ENCODE measurements at regions of chr3 and their contacts with region 1.

Region 1: GRCh38 chr3:195894780-195895607 is 13.4 kb downstream of the TNK2 start:
- DNase-seq: peak; percentile 71
- ATAC-seq: peak; percentile 29

Region 2: DNA sequence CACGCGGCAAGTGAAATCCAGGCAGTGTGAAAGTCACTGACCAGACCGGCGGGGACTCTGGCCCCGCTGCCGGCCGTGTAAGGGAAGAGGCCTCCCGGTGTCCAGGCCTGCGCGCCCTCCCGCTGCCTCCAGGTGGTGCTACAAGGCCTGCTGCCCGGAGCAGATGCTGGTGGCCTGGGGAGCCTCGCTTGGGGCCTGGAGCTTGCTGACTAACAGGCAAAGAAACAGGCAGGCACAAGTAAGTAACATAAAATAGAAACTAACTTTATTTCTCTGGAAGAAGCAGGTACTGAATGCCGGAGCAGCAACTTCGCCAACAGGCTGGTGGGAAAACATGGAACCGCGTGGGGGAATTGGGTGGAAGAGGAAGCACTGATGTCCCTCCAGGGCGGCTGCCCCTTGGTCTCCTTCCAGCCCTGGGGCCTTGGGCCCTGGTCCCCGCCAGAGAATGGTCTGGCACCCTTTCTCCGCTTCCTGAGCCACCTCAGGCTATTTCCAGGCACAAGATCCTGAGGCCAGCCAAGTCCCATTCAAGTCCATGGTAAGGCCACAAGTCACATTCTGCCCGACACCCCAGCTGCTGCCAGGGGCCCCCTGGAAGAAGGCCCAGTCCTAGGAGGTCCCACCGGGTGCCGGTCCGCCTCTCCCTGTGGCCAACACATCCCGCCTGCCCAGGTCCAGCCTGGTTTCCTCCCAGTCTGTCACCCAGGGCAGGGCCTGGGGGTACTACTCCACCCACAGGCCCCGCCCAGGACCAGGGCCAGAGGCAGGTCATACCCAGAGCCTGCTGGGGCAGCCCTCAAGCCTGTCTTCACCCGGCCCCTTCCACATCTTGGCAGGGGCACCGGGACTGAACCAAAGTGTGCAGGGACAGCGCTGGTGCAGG is 31.6 kb before region 1 on chr3:
- intact Hi-C with region 1: loop called (anchors 5 kb)
- DNase-seq: peak; percentile 95
- ATAC-seq: peak; percentile 97